ENCODE measurements at regions of chr6 and their contacts with region 1.

Region 1: GRCh38 chr6:130020907-130021629 is 2.7 kb downstream of the L3MBTL3 start:
- DNase-seq: peak; percentile 67
- ATAC-seq: peak; percentile 84
- H3K4me3 ChIP-seq: peak overlapping the region; percentile 57 to 73
- H3K27ac ChIP-seq: no peak overlapping the region
- H3K4me1 ChIP-seq: no peaks in the 10 kb centered on the region
- H3K27me3 ChIP-seq: no peaks in the 10 kb centered on the region; the same call in 1 of the 2 replicates
- CTCF ChIP-seq: peak; percentile 87

Region 2: GRCh38 chr6:129774697-129775447 is 246.2 kb before region 1 on chr6:
- CTCF ChIA-PET with region 1: no interaction called
- POLR2A ChIA-PET with region 1: interaction called, 20 read pairs
- in situ Hi-C with region 1: no loop called
- intact Hi-C with region 1: no loop called
- DNase-seq: peak; percentile 46
- ATAC-seq: peak; percentile 66
- H3K4me3 ChIP-seq: no peak overlapping the region
- H3K27ac ChIP-seq: no peak overlapping the region
- H3K4me1 ChIP-seq: no peaks in the 10 kb centered on the region
- H3K27me3 ChIP-seq: no peaks in the 10 kb centered on the region
- CTCF ChIP-seq: peak; percentile 90

Region 3: DNA sequence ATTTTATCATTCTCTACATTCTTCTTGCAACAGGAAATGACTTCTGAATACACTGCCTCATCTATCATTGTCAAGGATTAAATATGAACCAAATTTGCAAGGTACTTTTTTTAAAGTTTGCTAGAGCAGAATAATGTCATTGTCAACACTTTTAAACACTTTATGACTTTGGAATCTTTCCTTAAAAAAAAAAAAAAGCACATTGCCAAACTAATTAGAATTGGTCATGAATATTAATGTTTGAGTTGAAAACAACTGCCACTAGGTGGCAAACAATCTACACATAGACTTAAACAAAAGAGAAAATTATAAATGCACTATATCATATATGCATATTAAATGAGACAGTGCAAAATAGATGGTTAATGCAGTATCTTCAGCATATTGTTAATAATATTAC is 127.4 kb before region 1 on chr6:
- CTCF ChIA-PET with region 1: no interaction called
- POLR2A ChIA-PET with region 1: no interaction called
- in situ Hi-C with region 1: no loop called
- intact Hi-C with region 1: loop called (anchors 2 kb)
- DNase-seq: no peak
- ATAC-seq: no peak
- H3K4me3 ChIP-seq: no peak overlapping the region
- H3K27ac ChIP-seq: no peak overlapping the region
- H3K4me1 ChIP-seq: no peaks in the 10 kb centered on the region
- H3K27me3 ChIP-seq: no peaks in the 10 kb centered on the region
- CTCF ChIP-seq: peak; percentile 24; the same call in 1 of the 2 replicates

Region 4: DNA sequence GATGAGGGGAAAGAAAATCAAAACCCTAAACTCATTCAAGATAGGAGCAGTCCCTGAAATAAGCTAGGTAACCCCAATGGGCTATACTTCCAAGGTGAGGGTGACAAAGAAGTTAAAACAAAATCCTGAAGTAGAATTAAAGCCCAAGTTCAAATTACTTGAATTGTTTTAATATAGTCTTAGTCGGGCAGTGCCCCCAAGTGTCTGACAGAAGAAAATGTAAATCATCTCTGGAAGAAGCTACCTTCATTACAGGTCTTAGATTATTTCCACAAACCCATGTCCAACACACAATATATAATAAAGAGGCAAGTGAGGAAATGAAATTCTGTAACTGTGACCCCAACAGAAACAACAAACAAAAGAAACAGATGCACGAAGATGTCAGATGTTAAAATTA is 39.5 kb before region 1 on chr6:
- CTCF ChIA-PET with region 1: no interaction called
- POLR2A ChIA-PET with region 1: no interaction called
- in situ Hi-C with region 1: no loop called
- intact Hi-C with region 1: no loop called
- DNase-seq: no peak
- ATAC-seq: no peak
- H3K4me3 ChIP-seq: no peak overlapping the region
- H3K27ac ChIP-seq: no peak overlapping the region
- H3K4me1 ChIP-seq: no peaks in the 10 kb centered on the region
- H3K27me3 ChIP-seq: no peaks in the 10 kb centered on the region
- CTCF ChIP-seq: peak; percentile 8; the same call in 1 of the 2 replicates

Region 5: GRCh38 chr6:131519670-131520436 is 1498.8 kb after region 1 on chr6:
- CTCF ChIA-PET with region 1: no interaction called
- POLR2A ChIA-PET with region 1: no interaction called
- in situ Hi-C with region 1: no loop called
- intact Hi-C with region 1: loop called (anchors 5 kb)
- DNase-seq: no peak
- ATAC-seq: peak; percentile 91
- H3K4me3 ChIP-seq: no peak overlapping the region
- H3K27ac ChIP-seq: no peak overlapping the region
- H3K4me1 ChIP-seq: no peaks in the 10 kb centered on the region
- H3K27me3 ChIP-seq: no peaks in the 10 kb centered on the region
- CTCF ChIP-seq: peak; percentile 75

Measured in Panc1 (cell line).